ENCODE measurements at regions of chr20 and their contacts with region 1.

Region 1: GRCh38 chr20:45311589-45312211 is 3.6 kb upstream of the MATN4 start:
- DNase-seq: peak in 1 of 2 donors; percentile 72
- ATAC-seq: peak; percentile 76

Region 2: GRCh38 chr20:45070932-45071632 is 240.6 kb before region 1 on chr20:
- intact Hi-C with region 1: no loop called
- DNase-seq: no peak
- ATAC-seq: no peak

Region 3: GRCh38 chr20:45523821-45524220 is 212.1 kb after region 1 on chr20:
- intact Hi-C with region 1: no loop called
- DNase-seq: no peak
- ATAC-seq: no peak

Region 4: DNA sequence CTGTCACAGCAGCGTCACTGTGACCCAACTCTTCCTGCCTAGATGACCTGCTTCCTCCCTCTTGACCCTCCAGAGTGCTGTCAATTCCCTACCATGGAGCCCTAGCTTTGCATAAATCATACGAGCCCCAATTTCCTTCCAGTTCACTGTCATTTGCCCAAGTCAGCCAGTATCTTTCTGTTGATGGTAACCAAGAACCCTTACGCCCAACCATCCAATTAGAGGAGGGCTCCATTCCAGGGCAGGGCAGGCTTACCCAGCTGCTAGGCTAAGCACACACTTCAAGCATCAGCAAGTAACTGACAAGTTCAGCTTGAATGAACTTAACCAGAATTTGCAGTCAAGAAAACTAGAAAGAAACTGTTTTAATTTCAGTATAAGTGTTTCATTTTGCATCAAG is 454.3 kb after region 1 on chr20:
- intact Hi-C with region 1: loop called in 1 of 2 experiments (anchors 5 kb)
- DNase-seq: no peak
- ATAC-seq: no peak

Measured in left colon (tissue), 2 donors.